Panc1 (cell line): ENCODE measurements at regions of chr1 and their contacts with region 1.

Region 1: GRCh38 chr1:165988275-165988674 is 160.9 kb downstream of the UCK2 start:
- DNase-seq: no peak
- ATAC-seq: peak; percentile 53; the same call in 1 of the 2 replicates
- H3K4me3 ChIP-seq: no peak overlapping the region
- H3K27ac ChIP-seq: no peak overlapping the region
- H3K4me1 ChIP-seq: no peaks in the 10 kb centered on the region
- H3K27me3 ChIP-seq: no peaks in the 10 kb centered on the region
- CTCF ChIP-seq: peak; percentile 18; the same call in 1 of the 2 replicates

Region 2: DNA sequence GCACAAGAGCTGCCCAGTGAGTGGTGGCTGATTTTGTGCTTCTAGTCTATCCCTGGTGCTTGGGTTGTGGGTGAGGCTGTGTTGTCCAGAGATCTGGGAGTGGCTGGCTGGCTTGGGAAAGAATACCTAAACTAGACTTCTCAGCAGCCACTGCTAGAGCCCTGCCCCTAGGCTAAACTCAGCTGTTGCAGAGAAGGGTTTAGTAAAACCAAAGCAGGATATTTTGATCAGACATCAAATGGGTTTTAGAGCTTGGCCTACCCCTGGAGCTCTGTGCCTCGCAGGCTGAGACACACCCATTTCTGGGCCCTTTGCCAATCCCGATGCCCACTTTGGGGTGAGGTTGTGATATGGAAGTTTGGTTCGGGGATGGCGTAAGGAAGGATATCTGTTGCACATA is 72.3 kb before region 1 on chr1:
- CTCF ChIA-PET with region 1: no interaction called
- POLR2A ChIA-PET with region 1: no interaction called
- in situ Hi-C with region 1: no loop called
- intact Hi-C with region 1: no loop called
- DNase-seq: no peak
- ATAC-seq: no peak
- H3K4me3 ChIP-seq: no peak overlapping the region
- H3K27ac ChIP-seq: no peak overlapping the region
- H3K4me1 ChIP-seq: no peaks in the 10 kb centered on the region
- H3K27me3 ChIP-seq: no peaks in the 10 kb centered on the region
- CTCF ChIP-seq: no peak

Region 3: GRCh38 chr1:165942927-165943597 is 45.2 kb before region 1 on chr1:
- CTCF ChIA-PET with region 1: no interaction called
- POLR2A ChIA-PET with region 1: interaction called, 14 read pairs
- in situ Hi-C with region 1: no loop called
- intact Hi-C with region 1: no loop called
- DNase-seq: no peak
- ATAC-seq: no peak
- H3K4me3 ChIP-seq: no peak overlapping the region
- H3K27ac ChIP-seq: no peak overlapping the region
- H3K4me1 ChIP-seq: no peaks in the 10 kb centered on the region
- H3K27me3 ChIP-seq: peaks cover 11% of the 10 kb centered on the region
- CTCF ChIP-seq: 0 out of 2 replicates have a peak, but pooled peaks have one; percentile 12

Region 4: GRCh38 chr1:165965857-165966256 is 22.4 kb before region 1 on chr1:
- CTCF ChIA-PET with region 1: no interaction called
- POLR2A ChIA-PET with region 1: no interaction called
- in situ Hi-C with region 1: no loop called
- intact Hi-C with region 1: no loop called
- DNase-seq: no peak
- ATAC-seq: no peak
- H3K4me3 ChIP-seq: no peak overlapping the region
- H3K27ac ChIP-seq: no peak overlapping the region
- H3K4me1 ChIP-seq: no peaks in the 10 kb centered on the region
- H3K27me3 ChIP-seq: no peaks in the 10 kb centered on the region
- CTCF ChIP-seq: no peak